Naive thymus-derived CD4-positive, alpha-beta T cell (primary cell): ENCODE measurements at regions of chr3 and their contacts with region 1.

Region 1: DNA sequence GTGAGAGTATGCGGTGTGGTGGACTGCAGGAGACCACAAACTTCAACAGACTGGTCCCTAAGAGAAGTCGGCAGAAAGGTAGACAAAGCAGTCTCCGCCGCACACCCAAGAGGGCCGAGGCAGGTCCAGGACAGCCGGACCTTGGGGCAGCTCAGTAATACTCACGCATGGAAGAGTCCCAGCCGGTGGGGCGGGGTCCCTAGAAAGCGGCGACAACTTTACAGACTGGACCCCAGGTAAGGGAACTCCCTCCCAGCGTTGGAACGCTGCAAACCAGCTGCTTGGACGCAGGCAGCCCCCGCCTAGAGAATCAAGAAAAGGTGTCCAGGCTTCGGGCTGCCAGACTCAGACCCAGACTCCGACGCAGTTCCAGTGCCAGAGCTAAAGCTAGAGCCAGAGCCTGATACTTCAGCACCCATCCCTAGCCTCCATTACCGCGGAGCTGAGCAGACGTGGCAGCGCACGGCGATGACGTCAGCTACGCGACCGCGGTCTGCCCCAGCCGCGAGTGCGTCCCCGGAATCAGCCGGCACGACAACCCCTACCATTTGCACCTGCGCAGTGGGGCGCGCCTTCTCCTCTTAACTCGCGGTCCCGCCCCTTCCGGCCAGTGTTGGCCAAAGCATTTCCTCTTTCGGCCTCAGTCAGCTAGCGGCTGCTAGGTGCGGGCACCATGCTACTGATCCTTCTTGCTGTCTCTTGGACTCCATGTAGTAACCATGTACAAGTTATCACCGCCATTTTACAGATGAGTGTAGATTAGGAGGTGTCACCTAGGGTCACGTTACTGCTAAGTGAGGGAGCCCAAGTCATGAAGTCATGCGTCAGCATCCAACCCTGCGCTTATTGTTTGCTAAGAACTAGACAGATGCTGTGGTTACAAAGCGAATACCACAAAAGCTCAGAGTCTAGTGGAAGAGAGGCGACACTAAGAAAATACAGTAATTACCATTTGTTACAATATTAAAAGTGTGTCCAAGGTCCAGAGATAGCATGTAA is at the start of gene TMEM39A:
- DNase-seq: peak; percentile 97 to 99 (median 98)
- ATAC-seq: peak; percentile 91
- H3K4me3 ChIP-seq: peak within 1 kb of the TSS; percentile 93
- H3K4me3 Mint-ChIP-seq: peak within 1 kb of the TSS; percentile 82 to 96 (median 93)
- H3K27ac ChIP-seq: peak within 1 kb of the TSS; percentile 86
- H3K27ac Mint-ChIP-seq: peak within 1 kb of the TSS; percentile 97 to 100 (median 99)
- H3K4me1 ChIP-seq: peaks cover 16 to 26% of the 10 kb centered on the region in 2 donors
- H3K4me1 Mint-ChIP-seq: peaks cover 22 to 56% (median 45%) of the 10 kb centered on the region in 7 donors
- H3K27me3 ChIP-seq: no peaks in the 10 kb centered on the region
- H3K27me3 Mint-ChIP-seq: peaks cover 0 to 4% (median 0%) of the 10 kb centered on the region in 5 donors
- total RNA-seq, gene TMEM39A: 34.9 to 59.5 (median 49.7) TPM

Region 2: GRCh38 chr3:118098827-118099226 is 1364.6 kb before region 1 on chr3:
- CTCF ChIA-PET with region 1: no interaction called
- POLR2A ChIA-PET with region 1: no interaction called
- intact Hi-C with region 1: no loop called
- DNase-seq: no peak
- ATAC-seq: no peak
- H3K4me3 ChIP-seq: no peak overlapping the region
- H3K4me3 Mint-ChIP-seq: no peak overlapping the region
- H3K27ac ChIP-seq: no peak overlapping the region
- H3K27ac Mint-ChIP-seq: no peak overlapping the region
- H3K4me1 ChIP-seq: no peaks in the 10 kb centered on the region
- H3K4me1 Mint-ChIP-seq: no peaks in the 10 kb centered on the region
- H3K27me3 ChIP-seq: no peaks in the 10 kb centered on the region
- H3K27me3 Mint-ChIP-seq: no peaks in the 10 kb centered on the region

Region 3: GRCh38 chr3:119293871-119294695 is 169.4 kb before region 1 on chr3 and contains the start of gene ARHGAP31:
- CTCF ChIA-PET with region 1: no interaction called
- POLR2A ChIA-PET with region 1: interaction called, 5 read pairs
- intact Hi-C with region 1: loop called (anchors 1 kb)
- DNase-seq: peak; percentile 70 to 91 (median 86)
- ATAC-seq: peak; percentile 77
- H3K4me3 ChIP-seq: peak within 1 kb of the TSS; percentile 50
- H3K4me3 Mint-ChIP-seq: peak within 1 kb of the TSS; percentile 68 to 95 (median 90)
- H3K27ac ChIP-seq: peak within 1 kb of the TSS; percentile 91
- H3K27ac Mint-ChIP-seq: peak within 1 kb of the TSS; percentile 71 to 99 (median 92)
- H3K4me1 ChIP-seq: peaks cover 22 to 26% of the 10 kb centered on the region in 2 donors
- H3K4me1 Mint-ChIP-seq: peaks cover 26 to 74% (median 63%) of the 10 kb centered on the region in 7 donors
- H3K27me3 ChIP-seq: no peaks in the 10 kb centered on the region
- H3K27me3 Mint-ChIP-seq: peaks cover 0 to 43% (median 0%) of the 10 kb centered on the region in 5 donors
- total RNA-seq, gene ARHGAP31: 3.0 to 11.9 (median 3.1) TPM

Region 4: GRCh38 chr3:119443179-119443578 is 20.3 kb before region 1 on chr3:
- CTCF ChIA-PET with region 1: no interaction called
- POLR2A ChIA-PET with region 1: interaction called, 3 read pairs
- intact Hi-C with region 1: loop called in 1 of 2 experiments (anchors 2 kb)
- DNase-seq: no peak
- ATAC-seq: no peak
- H3K4me3 ChIP-seq: no peak overlapping the region
- H3K4me3 Mint-ChIP-seq: no peak overlapping the region
- H3K27ac ChIP-seq: no peak overlapping the region
- H3K27ac Mint-ChIP-seq: peak overlapping the region in 1 of 9 donors; percentile 17
- H3K4me1 ChIP-seq: no peaks in the 10 kb centered on the region
- H3K4me1 Mint-ChIP-seq: peaks cover 0 to 9% (median 0%) of the 10 kb centered on the region in 7 donors
- H3K27me3 ChIP-seq: no peaks in the 10 kb centered on the region
- H3K27me3 Mint-ChIP-seq: no peaks in the 10 kb centered on the region

Region 5: GRCh38 chr3:119508172-119508845 is 44.8 kb after region 1 on chr3:
- CTCF ChIA-PET with region 1: no interaction called
- POLR2A ChIA-PET with region 1: no interaction called
- intact Hi-C with region 1: no loop called
- DNase-seq: peak in 1 of 9 donors; percentile 35
- ATAC-seq: no peak
- H3K4me3 ChIP-seq: no peak overlapping the region
- H3K4me3 Mint-ChIP-seq: peak overlapping the region in 1 of 10 donors; percentile 57
- H3K27ac ChIP-seq: no peak overlapping the region
- H3K27ac Mint-ChIP-seq: peak overlapping the region in 2 of 9 donors; percentile 49 to 84
- H3K4me1 ChIP-seq: peaks cover 0 to 12% of the 10 kb centered on the region in 2 donors
- H3K4me1 Mint-ChIP-seq: peaks cover 20 to 44% (median 37%) of the 10 kb centered on the region in 7 donors
- H3K27me3 ChIP-seq: no peaks in the 10 kb centered on the region
- H3K27me3 Mint-ChIP-seq: no peaks in the 10 kb centered on the region

Region 6: DNA sequence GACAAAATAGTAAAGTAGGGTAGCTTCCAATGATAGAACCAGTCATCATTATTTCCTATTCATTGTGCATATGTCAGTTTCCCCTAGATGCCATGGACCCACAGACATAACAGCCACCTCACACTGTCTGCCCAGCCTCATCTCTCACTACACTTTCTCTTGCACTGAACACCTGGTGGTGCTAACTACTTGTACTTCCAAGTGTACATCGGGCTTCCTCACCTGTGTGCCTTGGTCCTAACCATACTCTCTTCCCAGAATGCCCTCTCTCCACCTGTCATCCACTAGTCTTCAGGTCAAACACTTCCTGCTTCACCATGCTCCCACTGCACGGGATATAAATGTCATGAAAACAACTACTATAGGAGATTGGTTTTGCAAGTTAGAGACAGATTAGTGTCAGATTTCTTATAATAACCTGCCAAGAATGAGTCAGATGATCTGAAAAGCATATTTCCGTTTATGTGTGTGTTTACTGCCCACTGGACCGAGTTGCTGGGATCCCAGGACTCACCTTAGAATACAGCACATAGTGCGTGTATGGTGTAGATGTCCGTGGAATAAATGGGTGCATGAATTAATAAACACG is 155.5 kb after region 1 on chr3:
- CTCF ChIA-PET with region 1: no interaction called
- POLR2A ChIA-PET with region 1: no interaction called
- intact Hi-C with region 1: no loop called
- DNase-seq: no peak
- ATAC-seq: no peak
- H3K4me3 ChIP-seq: no peak overlapping the region
- H3K4me3 Mint-ChIP-seq: no peak overlapping the region
- H3K27ac ChIP-seq: no peak overlapping the region
- H3K27ac Mint-ChIP-seq: no peak overlapping the region
- H3K4me1 ChIP-seq: no peaks in the 10 kb centered on the region
- H3K4me1 Mint-ChIP-seq: no peaks in the 10 kb centered on the region
- H3K27me3 ChIP-seq: no peaks in the 10 kb centered on the region
- H3K27me3 Mint-ChIP-seq: peaks cover 0 to 19% (median 5%) of the 10 kb centered on the region in 5 donors

Region 7: GRCh38 chr3:119637679-119638525 is 174.4 kb after region 1 on chr3:
- CTCF ChIA-PET with region 1: no interaction called
- POLR2A ChIA-PET with region 1: no interaction called
- intact Hi-C with region 1: loop called in 1 of 2 experiments (anchors 1 kb)
- DNase-seq: no peak
- ATAC-seq: peak; percentile 63
- H3K4me3 ChIP-seq: no peak overlapping the region
- H3K4me3 Mint-ChIP-seq: peak overlapping the region in 1 of 10 donors; percentile 59
- H3K27ac ChIP-seq: no peak overlapping the region
- H3K27ac Mint-ChIP-seq: peak overlapping the region in 1 of 9 donors; percentile 88
- H3K4me1 ChIP-seq: no peaks in the 10 kb centered on the region
- H3K4me1 Mint-ChIP-seq: peaks cover 0 to 43% (median 0%) of the 10 kb centered on the region in 7 donors
- H3K27me3 ChIP-seq: no peaks in the 10 kb centered on the region
- H3K27me3 Mint-ChIP-seq: no peaks in the 10 kb centered on the region

Region 8: GRCh38 chr3:120708408-120708807 is 1244.9 kb after region 1 on chr3:
- CTCF ChIA-PET with region 1: no interaction called
- POLR2A ChIA-PET with region 1: no interaction called
- intact Hi-C with region 1: loop called in 1 of 2 experiments (anchors 10 kb)
- DNase-seq: no peak
- ATAC-seq: no peak
- H3K4me3 ChIP-seq: no peak overlapping the region
- H3K4me3 Mint-ChIP-seq: no peak overlapping the region
- H3K27ac ChIP-seq: no peak overlapping the region
- H3K27ac Mint-ChIP-seq: peak overlapping the region in 2 of 9 donors; percentile 13 to 62
- H3K4me1 ChIP-seq: no peaks in the 10 kb centered on the region
- H3K4me1 Mint-ChIP-seq: peaks cover 0 to 21% (median 10%) of the 10 kb centered on the region in 7 donors
- H3K27me3 ChIP-seq: no peaks in the 10 kb centered on the region
- H3K27me3 Mint-ChIP-seq: no peaks in the 10 kb centered on the region